BJ (cell line): ENCODE measurements at regions of chr1 and their contacts with region 1.

Region 1: DNA sequence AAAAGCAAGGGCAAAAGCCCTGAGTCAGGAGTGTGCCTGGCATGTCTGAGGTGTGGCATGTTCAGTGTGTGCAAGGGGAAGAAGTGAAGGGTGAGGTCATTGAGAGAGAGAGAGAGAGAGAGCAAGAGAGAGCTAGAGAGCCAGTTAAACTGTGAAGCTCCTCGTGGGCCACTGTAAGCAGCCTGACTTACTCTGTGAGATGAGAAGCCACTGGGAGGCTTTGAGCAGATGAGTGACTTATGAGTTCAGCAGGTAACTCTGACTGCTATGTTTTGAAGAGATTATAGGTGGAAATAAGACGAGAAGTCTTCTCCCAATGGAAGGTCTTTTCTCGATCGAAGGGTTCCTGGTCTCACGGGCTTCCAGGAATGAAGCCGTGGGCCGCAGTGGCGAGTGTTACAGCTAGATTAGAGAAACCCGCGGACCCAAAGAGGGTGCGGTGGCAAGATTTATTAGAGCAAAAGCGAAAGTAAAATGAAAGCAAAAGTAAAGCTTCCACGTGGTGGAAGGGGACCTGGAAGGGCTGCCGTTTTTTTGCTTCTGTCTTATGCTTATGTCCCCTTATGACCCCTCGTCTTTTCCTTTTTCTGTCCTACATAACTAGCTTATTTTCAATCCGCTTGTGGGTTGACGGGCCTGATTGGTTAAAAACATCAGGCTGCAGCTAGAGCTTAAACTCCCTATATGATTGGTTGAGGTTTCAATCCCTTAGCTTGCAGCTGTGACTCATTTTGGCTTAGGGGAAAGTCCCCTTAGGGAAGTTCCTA is 323.1 kb upstream of the FAM78B start:
- DNase-seq: no peak
- H3K4me3 ChIP-seq: no peak overlapping the region
- H3K27me3 ChIP-seq: no peaks in the 10 kb centered on the region
- CTCF ChIP-seq: no peak

Region 2: DNA sequence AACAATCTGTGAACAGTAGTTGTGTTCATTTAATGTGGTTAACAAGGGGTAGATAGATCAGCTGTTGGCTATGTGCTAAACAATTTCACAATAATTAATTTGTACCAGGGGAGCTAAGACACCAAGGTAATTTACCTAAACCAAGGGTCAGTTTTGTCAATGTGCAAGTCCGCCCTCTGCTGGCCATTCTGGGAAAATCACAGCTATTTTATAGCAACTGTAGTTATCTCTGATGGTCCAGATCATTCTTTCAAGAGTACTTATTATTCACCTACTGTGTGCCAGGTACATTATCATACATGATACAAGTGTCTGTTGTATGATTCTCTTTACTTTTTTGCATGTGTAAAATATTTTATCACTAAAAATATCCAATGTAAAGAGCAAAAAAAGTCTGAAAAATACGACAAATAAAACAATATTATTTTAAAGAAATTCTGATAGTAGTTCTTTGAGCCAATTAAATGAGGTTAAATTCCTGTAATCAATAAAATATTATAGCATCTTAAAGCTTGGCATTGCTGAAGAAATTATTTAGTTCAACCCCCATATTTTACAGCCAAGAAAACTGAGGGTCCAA is 10.7 kb before region 1 on chr1:
- CTCF ChIA-PET with region 1: interaction called, 14 read pairs
- POLR2A ChIA-PET with region 1: no interaction called
- DNase-seq: no peak
- H3K4me3 ChIP-seq: no peak overlapping the region
- H3K27me3 ChIP-seq: no peaks in the 10 kb centered on the region
- CTCF ChIP-seq: peak; percentile 75

Region 3: DNA sequence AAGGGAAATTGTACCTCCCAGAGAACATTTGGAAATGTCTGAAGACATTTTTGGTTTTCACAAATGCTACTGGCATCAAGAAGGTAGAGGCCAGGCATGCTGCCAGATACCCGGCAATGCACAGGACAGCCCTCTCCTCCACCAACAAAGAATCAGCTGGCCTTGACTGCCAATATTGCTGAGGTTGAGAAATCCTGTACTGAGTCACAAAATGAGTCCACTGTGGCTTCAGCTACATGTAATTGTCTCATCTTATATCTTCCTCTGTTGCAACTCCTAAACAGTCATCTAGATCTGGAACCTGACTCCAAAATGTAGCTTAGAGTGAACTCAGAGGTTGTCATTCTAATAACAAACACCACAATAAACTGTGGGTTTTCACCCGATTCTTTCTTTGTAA is 21.9 kb after region 1 on chr1:
- CTCF ChIA-PET with region 1: no interaction called
- POLR2A ChIA-PET with region 1: no interaction called
- DNase-seq: no peak
- H3K4me3 ChIP-seq: no peak overlapping the region
- H3K27me3 ChIP-seq: no peaks in the 10 kb centered on the region
- CTCF ChIP-seq: no peak